Activated T-helper 1 cell treated with anti-CD3 and anti-CD28 coated beads, Interleukin-12 subunit alpha, Interleukin-12 subunit beta, Interleukin-2, Interleukin-4 antibody, amounts not matched to agents 30 ng/mL and 10 ng/mL and 1 ng/mL, durations not matched to agents 14 hours and 24 hours and 36 hours (primary cell): ENCODE measurements at regions of chr9 and their contacts with region 1.

Region 1: DNA sequence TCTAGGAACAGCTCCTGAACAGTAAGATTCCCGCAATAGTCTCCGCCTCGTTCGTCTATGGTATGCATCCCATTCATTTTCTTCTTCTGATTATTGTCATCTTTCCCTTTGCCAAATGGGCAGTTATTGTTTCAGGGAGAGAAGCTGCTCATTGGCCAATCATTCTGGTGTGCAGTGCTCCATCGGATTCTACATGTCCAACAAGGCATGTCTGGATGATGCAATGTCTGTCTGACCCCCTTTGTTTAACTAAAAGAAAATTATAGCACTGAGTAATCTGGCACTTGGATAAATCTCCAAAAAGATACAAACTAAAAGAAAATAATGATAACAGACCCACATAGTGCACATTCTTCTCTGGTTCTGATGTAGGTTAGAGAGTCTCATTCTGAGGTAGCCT is 515.6 kb upstream of the DMAC1 start:
- DNase-seq: no peak
- H3K4me3 Mint-ChIP-seq: no peak overlapping the region
- H3K27ac Mint-ChIP-seq: no peak overlapping the region
- H3K4me1 Mint-ChIP-seq: no peaks in the 10 kb centered on the region
- H3K27me3 Mint-ChIP-seq: no peaks in the 10 kb centered on the region

Region 2: DNA sequence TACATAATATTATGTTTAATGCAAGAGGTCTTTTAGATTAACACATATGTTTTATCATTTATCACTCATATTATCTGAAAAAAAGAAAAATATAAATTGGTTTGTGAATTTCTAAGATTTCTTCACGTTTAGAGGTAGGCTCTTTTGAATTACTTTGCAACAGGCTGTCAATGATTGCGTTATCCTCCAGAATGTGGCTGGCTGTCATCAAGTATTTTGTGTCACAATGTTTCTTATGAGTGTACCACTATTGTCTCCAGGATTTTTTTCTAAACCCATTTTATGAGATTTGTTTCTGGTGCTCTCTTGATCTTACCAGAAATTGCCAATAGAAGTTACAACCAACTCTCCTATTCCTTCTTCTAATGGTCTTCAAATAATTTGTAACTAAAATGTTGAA is 823.6 kb before region 1 on chr9:
- intact Hi-C with region 1: no loop called
- DNase-seq: no peak
- H3K4me3 Mint-ChIP-seq: no peak overlapping the region
- H3K27ac Mint-ChIP-seq: no peak overlapping the region
- H3K4me1 Mint-ChIP-seq: no peaks in the 10 kb centered on the region
- H3K27me3 Mint-ChIP-seq: peaks cover 11% of the 10 kb centered on the region

Region 3: GRCh38 chr9:8292657-8293056 is 22.6 kb before region 1 on chr9:
- intact Hi-C with region 1: loop called (anchors 2 kb)
- DNase-seq: no peak
- H3K4me3 Mint-ChIP-seq: no peak overlapping the region
- H3K27ac Mint-ChIP-seq: no peak overlapping the region
- H3K4me1 Mint-ChIP-seq: no peaks in the 10 kb centered on the region
- H3K27me3 Mint-ChIP-seq: no peaks in the 10 kb centered on the region